Activated naive CD4-positive, alpha-beta T cell treated with anti-CD3 and anti-CD28 coated beads for 36 hours (primary cell): ENCODE measurements at regions of chr6 and their contacts with region 1.

Region 1: DNA sequence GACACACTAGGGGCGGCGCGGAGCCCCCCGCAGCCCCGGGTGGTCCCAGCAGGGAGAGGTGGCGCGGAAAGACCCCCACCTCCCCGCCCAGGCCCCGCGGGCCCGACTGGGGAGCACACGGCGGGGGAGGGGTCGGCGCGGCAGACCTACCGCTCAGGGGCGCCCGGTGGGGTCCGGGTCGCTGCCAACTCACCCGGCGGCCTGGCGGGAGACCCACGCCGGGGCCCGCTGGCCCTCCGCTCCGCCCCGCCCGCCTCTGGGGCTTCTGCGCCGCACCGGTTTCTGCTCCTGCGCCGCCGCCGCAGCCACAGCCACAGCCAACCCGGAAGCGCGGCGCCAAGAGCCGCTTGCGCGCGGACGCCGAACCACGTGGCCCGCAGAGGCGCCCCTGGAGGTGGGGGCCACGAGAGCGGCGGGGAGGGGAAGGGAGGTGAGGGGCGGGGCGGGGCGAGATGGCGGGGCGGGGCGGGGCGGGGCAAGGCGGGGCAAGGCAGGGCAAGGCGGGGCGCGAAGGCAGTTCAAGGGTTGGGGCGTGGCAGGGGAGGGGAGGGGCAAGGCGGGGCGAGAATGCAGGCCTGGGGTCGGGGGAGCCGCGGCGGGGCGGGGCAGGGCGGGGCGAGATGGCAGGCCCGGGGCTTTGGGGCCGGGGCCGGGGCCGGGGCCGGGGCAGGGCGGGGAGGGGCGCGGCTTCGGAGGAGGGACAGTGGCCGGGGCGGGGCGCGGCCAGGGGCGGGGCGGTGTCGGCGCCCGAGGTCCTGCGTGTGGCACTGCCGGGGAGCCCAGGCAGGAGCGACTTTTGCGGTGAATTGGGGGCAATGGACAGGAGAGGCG is at the start of gene ZBTB24:
- DNase-seq: peak; percentile 88
- H3K4me3 Mint-ChIP-seq: peak within 1 kb of the TSS; percentile 85
- H3K27ac Mint-ChIP-seq: peak within 1 kb of the TSS; percentile 80
- H3K4me1 Mint-ChIP-seq: peaks cover 37% of the 10 kb centered on the region
- H3K27me3 Mint-ChIP-seq: no peaks in the 10 kb centered on the region
- total RNA-seq, gene ZBTB24: 6.9 to 7.4 TPM

Region 2: GRCh38 chr6:108782179-108783041 is 700.7 kb before region 1 on chr6:
- CTCF ChIA-PET with region 1: no interaction called
- intact Hi-C with region 1: no loop called
- DNase-seq: peak; percentile 92
- H3K4me3 Mint-ChIP-seq: peak overlapping the region; percentile 68
- H3K27ac Mint-ChIP-seq: no peak overlapping the region
- H3K4me1 Mint-ChIP-seq: peaks cover 10% of the 10 kb centered on the region
- H3K27me3 Mint-ChIP-seq: peaks cover 3% of the 10 kb centered on the region

Region 3: GRCh38 chr6:109202409-109203284 is 280.5 kb before region 1 on chr6:
- CTCF ChIA-PET with region 1: no interaction called
- intact Hi-C with region 1: loop called (anchors 2 kb)
- DNase-seq: peak; percentile 62
- H3K4me3 Mint-ChIP-seq: no peak overlapping the region
- H3K27ac Mint-ChIP-seq: no peak overlapping the region
- H3K4me1 Mint-ChIP-seq: peaks cover 7% of the 10 kb centered on the region
- H3K27me3 Mint-ChIP-seq: no peaks in the 10 kb centered on the region

Region 4: DNA sequence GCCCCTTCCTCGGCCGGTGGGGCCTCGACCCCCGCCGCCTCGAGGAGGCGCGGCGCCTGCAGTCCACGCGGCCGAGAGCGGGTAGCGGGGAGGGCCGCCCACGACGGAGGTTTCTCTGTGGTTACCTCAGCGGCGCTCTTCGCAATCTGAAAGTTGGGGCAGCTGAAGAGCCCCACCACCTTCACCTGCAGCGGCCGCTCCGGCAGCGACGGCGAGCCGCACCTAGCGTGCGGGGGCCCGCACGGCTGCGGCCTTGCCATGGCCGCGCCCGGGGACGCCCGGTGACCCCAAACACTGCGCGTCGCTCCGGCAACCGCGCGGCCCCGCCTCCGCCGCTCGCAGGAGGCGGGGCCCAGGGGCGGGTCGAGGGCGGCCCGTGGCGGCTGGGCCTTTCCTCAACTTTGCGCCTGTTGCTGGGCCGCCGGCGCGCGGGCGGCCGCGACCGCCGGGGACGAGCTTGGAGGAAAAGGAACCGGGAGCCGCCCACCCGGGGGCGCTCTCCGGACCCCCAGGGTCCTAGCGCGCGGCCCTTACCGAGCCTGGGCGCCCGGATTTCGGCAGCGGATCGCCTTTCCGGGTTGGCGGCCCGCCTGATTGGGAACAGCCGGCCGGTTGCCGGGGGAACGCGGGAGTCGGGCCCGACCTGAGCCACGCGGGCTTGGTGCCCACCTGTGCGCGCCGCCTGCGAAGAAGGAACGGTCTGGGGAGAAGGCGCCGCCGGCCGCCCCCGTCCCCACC is 42.6 kb before region 1 on chr6 and contains the starts of genes PPIL6 and SMPD2:
- CTCF ChIA-PET with region 1: interaction called, 3 read pairs
- intact Hi-C with region 1: loop called (anchors 1 kb)
- DNase-seq: peak; percentile 76
- H3K4me3 Mint-ChIP-seq: peak within 1 kb of the TSS; percentile 94
- H3K27ac Mint-ChIP-seq: peak within 1 kb of the TSS; percentile 87
- H3K4me1 Mint-ChIP-seq: peaks cover 27% of the 10 kb centered on the region
- H3K27me3 Mint-ChIP-seq: no peaks in the 10 kb centered on the region
- total RNA-seq, gene PPIL6: 0.19 TPM in 1 of 2 experiments, not detected in the other
- total RNA-seq, gene SMPD2: 9.4 to 9.7 TPM

Region 5: GRCh38 chr6:109455502-109456282 is 27.4 kb before region 1 on chr6 and contains the start of gene MICAL1:
- CTCF ChIA-PET with region 1: interaction called, 5 read pairs
- intact Hi-C with region 1: loop called (anchors 1 kb)
- DNase-seq: peak; percentile 69
- H3K4me3 Mint-ChIP-seq: peak within 1 kb of the TSS; percentile 91
- H3K27ac Mint-ChIP-seq: peak within 1 kb of the TSS; percentile 82
- H3K4me1 Mint-ChIP-seq: peaks cover 54% of the 10 kb centered on the region
- H3K27me3 Mint-ChIP-seq: no peaks in the 10 kb centered on the region
- total RNA-seq, gene MICAL1: 20.4 to 22.9 TPM

Region 6: DNA sequence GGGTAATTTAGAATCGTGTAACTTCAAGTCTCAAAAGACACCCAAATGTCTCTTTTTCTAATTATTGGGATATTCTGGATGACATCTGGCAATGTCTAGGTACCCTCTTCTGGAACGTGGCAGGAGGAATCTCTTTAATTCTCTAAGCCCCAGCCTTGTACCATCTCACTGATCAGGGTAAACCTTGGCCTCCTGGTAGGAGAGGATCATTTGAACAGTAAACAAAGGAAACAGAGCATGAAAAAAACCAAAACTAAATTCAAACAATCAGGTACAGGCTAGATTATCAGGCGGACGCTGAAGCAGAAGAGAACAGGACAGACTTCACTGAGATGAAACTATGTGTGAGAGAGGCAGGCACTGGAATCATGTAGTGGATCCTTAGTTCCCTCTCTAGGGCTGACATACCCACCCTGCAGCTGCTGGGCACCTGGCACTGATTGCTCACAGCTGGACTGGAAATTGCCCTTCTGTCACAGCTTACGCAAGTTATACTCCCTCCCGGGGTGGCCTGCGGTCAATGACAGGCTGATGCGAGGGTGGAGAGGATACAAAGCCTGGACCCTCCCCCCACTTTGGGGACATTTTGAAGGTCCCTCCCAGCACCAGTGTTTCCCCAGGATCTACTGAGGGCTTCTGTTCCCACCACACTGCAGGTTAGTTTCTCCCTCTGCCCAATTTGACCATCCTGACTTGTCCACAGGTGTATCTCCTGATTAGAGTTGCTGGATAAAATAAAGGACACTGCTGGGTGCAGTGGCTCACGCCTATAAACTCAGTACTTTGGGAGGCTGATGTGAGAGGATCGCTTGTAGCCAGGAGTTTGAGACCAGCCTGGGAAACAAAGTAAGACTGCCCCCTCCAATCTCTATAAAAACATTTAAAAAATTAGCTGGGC is 20.5 kb after region 1 on chr6:
- CTCF ChIA-PET with region 1: no interaction called
- intact Hi-C with region 1: no loop called
- DNase-seq: no peak
- H3K4me3 Mint-ChIP-seq: no peak overlapping the region
- H3K27ac Mint-ChIP-seq: no peak overlapping the region
- H3K4me1 Mint-ChIP-seq: no peaks in the 10 kb centered on the region
- H3K27me3 Mint-ChIP-seq: no peaks in the 10 kb centered on the region

Region 7: GRCh38 chr6:109513571-109514071 is 30.5 kb after region 1 on chr6:
- CTCF ChIA-PET with region 1: no interaction called
- intact Hi-C with region 1: loop called (anchors 2 kb)
- DNase-seq: no peak
- H3K4me3 Mint-ChIP-seq: no peak overlapping the region
- H3K27ac Mint-ChIP-seq: no peak overlapping the region
- H3K4me1 Mint-ChIP-seq: peaks cover 22% of the 10 kb centered on the region
- H3K27me3 Mint-ChIP-seq: no peaks in the 10 kb centered on the region

Region 8: GRCh38 chr6:109655761-109656262 is 172.7 kb after region 1 on chr6:
- CTCF ChIA-PET with region 1: no interaction called
- intact Hi-C with region 1: no loop called
- DNase-seq: no peak
- H3K4me3 Mint-ChIP-seq: no peak overlapping the region
- H3K27ac Mint-ChIP-seq: no peak overlapping the region
- H3K4me1 Mint-ChIP-seq: peaks cover 8% of the 10 kb centered on the region
- H3K27me3 Mint-ChIP-seq: no peaks in the 10 kb centered on the region

Region 9: GRCh38 chr6:109727622-109728021 is 244.5 kb after region 1 on chr6:
- CTCF ChIA-PET with region 1: no interaction called
- intact Hi-C with region 1: no loop called
- DNase-seq: no peak
- H3K4me3 Mint-ChIP-seq: no peak overlapping the region
- H3K27ac Mint-ChIP-seq: no peak overlapping the region
- H3K4me1 Mint-ChIP-seq: no peaks in the 10 kb centered on the region
- H3K27me3 Mint-ChIP-seq: no peaks in the 10 kb centered on the region